CD14-positive monocyte (primary cell): ENCODE measurements at regions of chr9 and their contacts with region 1.

Region 1: DNA sequence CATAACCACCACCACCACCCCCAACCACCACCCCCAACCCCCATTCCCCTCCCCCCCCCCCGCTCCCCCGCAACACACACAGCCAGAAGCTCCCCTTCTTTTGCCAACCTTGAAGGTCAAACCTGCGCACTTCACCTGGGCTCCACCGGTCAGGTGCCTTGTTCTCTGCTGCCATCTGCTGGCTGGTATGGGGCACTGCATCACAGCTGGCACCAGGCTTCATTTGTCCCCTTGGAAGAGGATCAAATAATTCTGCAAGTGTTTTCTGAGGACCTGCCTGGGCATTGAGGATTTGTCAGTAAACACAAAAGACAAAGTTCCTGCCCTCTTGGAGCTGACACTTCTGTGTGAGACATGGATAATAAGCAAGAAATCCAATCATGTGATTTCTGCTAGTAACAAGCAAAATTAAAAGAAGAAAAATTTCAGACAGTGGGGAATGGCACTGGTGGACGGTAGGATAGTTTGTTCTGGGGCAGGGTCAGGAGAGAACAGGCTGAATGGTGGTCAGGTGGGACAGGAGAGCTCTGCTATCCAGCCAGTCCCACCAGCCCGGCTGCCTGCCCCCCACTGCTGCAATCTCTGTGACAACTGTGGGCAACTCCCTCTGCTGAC is 55.6 kb upstream of the LMX1B start:
- DNase-seq: peak; percentile 38 to 60 (median 56)
- H3K4me3 ChIP-seq: no peak overlapping the region
- H3K4me3 Mint-ChIP-seq: no peak overlapping the region
- H3K27ac ChIP-seq: no peak overlapping the region
- H3K27ac Mint-ChIP-seq: peak overlapping the region in 1 of 7 donors; percentile 30
- H3K4me1 ChIP-seq: peaks cover 14 to 16% of the 10 kb centered on the region in 2 donors
- H3K4me1 Mint-ChIP-seq: peaks cover 12% of the 10 kb centered on the region
- H3K27me3 ChIP-seq: no peaks in the 10 kb centered on the region
- H3K27me3 Mint-ChIP-seq: peaks cover 0 to 9% (median 1%) of the 10 kb centered on the region in 3 donors
- CTCF ChIP-seq: peak; percentile 90

Region 2: GRCh38 chr9:126500684-126501382 is 57.3 kb before region 1 on chr9:
- intact Hi-C with region 1: loop called (anchors 1 kb)
- DNase-seq: peak; percentile 57 to 75 (median 60)
- H3K4me3 ChIP-seq: no peak overlapping the region
- H3K4me3 Mint-ChIP-seq: peak overlapping the region in 1 of 2 donors; percentile 69
- H3K27ac ChIP-seq: no peak overlapping the region
- H3K27ac Mint-ChIP-seq: peak overlapping the region in 1 of 7 donors; percentile 42
- H3K4me1 ChIP-seq: peaks cover 31 to 44% of the 10 kb centered on the region in 2 donors
- H3K4me1 Mint-ChIP-seq: peaks cover 35% of the 10 kb centered on the region
- H3K27me3 ChIP-seq: peaks cover 0 to 15% of the 10 kb centered on the region in 2 donors
- H3K27me3 Mint-ChIP-seq: peaks cover 13 to 19% (median 19%) of the 10 kb centered on the region in 3 donors
- CTCF ChIP-seq: peak; percentile 98

Region 3: DNA sequence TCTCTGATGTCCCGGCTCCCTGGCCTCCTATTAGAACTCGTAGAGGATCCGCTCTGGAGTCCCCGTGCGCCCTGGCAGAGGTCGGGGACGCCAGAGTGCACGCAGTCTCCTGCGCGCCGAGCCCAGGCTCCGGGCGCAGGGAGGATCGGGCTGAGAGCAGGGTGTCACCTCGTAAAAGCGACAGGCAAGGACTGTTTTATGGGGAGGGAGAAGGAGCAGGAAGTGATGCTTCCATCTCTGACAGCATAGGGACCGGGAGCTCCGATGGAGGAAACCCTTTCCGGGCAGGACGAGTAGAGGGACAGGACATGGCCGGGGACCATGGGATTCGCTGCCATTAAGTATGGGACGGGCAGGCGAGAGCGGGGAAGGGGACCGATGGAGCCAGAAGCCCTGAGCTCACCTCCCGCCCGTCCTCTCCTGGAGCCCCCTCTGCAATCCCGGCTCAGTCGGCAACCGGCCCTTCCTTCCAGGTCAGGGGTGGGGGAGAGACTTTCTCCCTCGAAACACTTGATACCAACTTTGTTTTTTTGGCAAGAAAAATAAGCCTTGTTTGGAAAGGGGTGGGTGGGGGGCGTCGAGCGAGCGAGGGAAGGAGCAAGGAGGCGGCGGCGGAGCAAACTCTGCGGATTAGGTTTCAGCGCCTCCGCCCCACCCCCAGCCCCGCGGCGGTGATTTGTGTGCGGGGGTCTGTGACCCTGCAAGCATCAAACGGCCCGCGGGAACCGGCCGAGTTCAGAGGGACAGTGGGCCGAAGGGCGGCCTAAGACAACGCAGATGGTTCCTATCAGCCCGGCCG is 68.2 kb after region 1 on chr9:
- intact Hi-C with region 1: no loop called
- DNase-seq: no peak
- H3K4me3 ChIP-seq: peak overlapping the region; percentile 4 to 62 (median 4)
- H3K4me3 Mint-ChIP-seq: peak overlapping the region; percentile 78 to 90
- H3K27ac ChIP-seq: no peak overlapping the region
- H3K27ac Mint-ChIP-seq: no peak overlapping the region
- H3K4me1 ChIP-seq: peaks cover 4 to 14% of the 10 kb centered on the region in 2 donors
- H3K4me1 Mint-ChIP-seq: peaks cover 11% of the 10 kb centered on the region
- H3K27me3 ChIP-seq: peaks cover 83 to 99% of the 10 kb centered on the region in 2 donors
- H3K27me3 Mint-ChIP-seq: peaks cover 95 to 100% (median 97%) of the 10 kb centered on the region in 3 donors
- CTCF ChIP-seq: no peak